ENCODE measurements at regions of chr2 and their contacts with region 1.

Region 1: DNA sequence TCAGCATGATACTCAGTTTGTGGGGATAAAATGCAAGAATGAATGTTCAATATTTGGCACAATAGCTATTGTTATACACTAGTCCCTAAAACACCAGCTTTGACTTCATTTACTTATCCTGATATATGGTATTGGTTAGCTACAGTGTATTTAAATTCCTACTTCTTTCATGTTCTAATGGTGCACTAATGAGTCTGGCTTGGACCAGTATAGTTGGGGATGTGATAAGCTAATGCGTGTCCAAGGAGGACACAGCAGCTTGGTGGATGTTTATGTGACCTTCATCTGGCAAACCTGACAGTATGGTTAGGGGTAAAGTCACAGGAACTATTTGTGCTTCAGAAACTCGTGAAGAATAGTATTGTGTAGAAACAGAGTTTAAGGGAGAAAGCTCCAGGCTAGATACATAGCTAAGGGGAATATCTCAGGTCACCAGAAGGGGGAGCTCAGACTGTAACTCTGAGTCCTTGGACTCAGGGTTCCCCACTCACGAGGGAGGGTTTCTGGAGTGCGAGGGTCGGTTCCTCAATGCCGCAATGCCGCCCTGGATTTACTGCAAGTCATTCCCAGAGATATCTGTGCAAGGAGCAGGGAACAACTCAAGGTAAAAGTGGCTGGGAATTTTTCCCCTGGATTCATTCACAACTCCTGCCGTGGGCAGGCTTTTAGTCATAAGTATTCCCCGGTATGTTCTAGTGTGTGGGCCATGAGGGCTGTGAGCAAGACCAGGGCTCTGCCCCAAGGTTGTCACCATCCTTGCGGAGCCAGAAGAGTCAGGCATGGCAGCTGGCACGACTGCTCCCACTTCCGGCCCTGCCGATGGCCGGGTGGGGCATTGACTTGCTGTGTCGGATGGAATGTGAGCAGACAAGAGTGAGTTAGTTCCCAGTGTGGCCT is 14.5 kb downstream of the IL1R2 start:
- DNase-seq: peak; percentile 56
- ATAC-seq: peak; percentile 97
- H3K4me3 ChIP-seq: no peak overlapping the region
- H3K27ac ChIP-seq: no peak overlapping the region
- H3K4me1 ChIP-seq: no peaks in the 10 kb centered on the region
- H3K27me3 ChIP-seq: peaks cover 5% of the 10 kb centered on the region; the same call in 1 of the 2 replicates
- CTCF ChIP-seq: peak; percentile 68
- POLR2A ChIP-seq: no peak
- RAD21 ChIP-seq: peak; percentile 73

Region 2: DNA sequence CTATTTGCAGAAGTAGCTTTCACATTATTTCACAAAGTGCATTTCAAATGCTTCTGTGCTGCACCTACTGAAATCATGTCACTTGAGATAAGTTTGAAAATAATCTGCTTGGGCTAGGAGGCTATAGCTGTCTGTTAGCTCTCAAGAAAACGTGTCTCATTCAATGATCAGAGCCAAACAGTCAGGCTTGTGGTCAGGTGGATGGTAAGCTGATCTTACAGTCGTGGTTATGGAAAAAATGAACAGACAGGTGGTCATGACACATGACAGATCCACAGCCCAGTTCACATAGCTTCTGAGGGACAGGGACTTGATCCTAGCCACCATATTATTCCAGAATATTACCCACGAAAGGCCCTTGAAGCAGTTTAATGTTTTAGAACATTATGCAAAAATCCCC is 504.8 kb before region 1 on chr2:
- CTCF ChIA-PET with region 1: no interaction called
- POLR2A ChIA-PET with region 1: no interaction called
- dilution Hi-C with region 1: no loop called
- in situ Hi-C with region 1: no loop called
- intact Hi-C with region 1: no loop called
- DNase-seq: peak; percentile 60
- ATAC-seq: no peak
- H3K4me3 ChIP-seq: no peak overlapping the region
- H3K27ac ChIP-seq: no peak overlapping the region
- H3K4me1 ChIP-seq: peaks cover 4% of the 10 kb centered on the region
- H3K27me3 ChIP-seq: no peaks in the 10 kb centered on the region
- CTCF ChIP-seq: no peak
- POLR2A ChIP-seq: no peak
- RAD21 ChIP-seq: no peak

Region 3: DNA sequence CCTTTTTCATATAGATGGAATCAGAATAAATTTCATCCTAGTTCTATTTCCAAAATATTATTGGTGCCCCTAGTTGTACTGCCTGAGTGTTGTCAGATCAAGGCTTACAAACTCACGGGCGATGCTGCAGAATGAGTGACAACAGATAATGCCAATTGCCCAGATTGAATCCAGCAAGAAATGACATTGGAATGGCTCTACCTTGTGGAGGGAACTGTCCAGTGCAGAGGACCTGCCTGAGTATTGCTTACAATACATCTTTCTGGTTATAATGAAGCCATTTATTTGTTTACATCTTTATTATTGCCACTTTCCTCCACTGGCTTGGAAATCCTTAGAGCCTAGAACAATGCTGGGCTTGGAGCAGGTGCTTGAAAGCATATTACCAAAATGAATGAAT is 22.3 kb before region 1 on chr2:
- CTCF ChIA-PET with region 1: interaction called, 11 read pairs
- POLR2A ChIA-PET with region 1: no interaction called
- dilution Hi-C with region 1: no loop called
- in situ Hi-C with region 1: no loop called
- intact Hi-C with region 1: no loop called
- DNase-seq: no peak
- ATAC-seq: peak; percentile 55
- H3K4me3 ChIP-seq: no peak overlapping the region
- H3K27ac ChIP-seq: no peak overlapping the region
- H3K4me1 ChIP-seq: no peaks in the 10 kb centered on the region
- H3K27me3 ChIP-seq: peaks cover 20% of the 10 kb centered on the region
- CTCF ChIP-seq: peak; percentile 39
- POLR2A ChIP-seq: no peak
- RAD21 ChIP-seq: peak; percentile 36

Region 4: DNA sequence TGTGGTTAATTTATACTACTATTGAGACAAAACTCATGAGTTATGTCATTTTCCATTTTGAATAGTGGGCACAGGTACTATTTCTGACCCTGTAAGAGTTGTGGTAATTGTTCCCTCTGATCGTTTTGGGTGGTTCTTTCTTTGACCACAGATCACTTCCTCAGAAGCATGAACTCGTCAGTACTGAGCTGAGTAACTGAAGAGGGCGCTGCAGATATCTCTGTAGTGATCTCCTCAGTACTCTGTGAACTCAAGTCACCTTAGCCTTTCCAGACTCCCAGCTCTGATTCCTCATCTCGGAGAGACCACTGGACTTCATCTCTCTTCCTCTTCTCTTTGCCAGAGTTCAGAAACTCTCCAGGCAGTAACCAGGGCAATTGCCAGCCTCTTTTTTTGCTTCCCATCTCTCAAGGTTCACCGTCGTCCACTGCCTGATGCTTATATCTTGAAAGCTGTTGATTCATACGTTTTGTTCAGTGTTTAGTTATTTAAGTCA is 295.7 kb after region 1 on chr2:
- CTCF ChIA-PET with region 1: no interaction called
- POLR2A ChIA-PET with region 1: no interaction called
- dilution Hi-C with region 1: no loop called
- in situ Hi-C with region 1: no loop called
- intact Hi-C with region 1: no loop called
- DNase-seq: peak; percentile 32
- ATAC-seq: peak; percentile 48; the same call in 1 of the 2 replicates
- H3K4me3 ChIP-seq: no peak overlapping the region
- H3K27ac ChIP-seq: no peak overlapping the region
- H3K4me1 ChIP-seq: 0 out of 2 replicates have a peak, but pooled peaks cover 2% of the 10 kb centered on the region
- H3K27me3 ChIP-seq: no peaks in the 10 kb centered on the region
- CTCF ChIP-seq: peak; percentile 26; the same call in 1 of the 2 replicates
- POLR2A ChIP-seq: no peak
- RAD21 ChIP-seq: peak; percentile 6; the same call in 1 of the 2 replicates

Measured in IMR-90 (cell line).